Mammary epithelial cell (primary cell): ENCODE measurements at regions of chr10 and their contacts with region 1.

Region 1: DNA sequence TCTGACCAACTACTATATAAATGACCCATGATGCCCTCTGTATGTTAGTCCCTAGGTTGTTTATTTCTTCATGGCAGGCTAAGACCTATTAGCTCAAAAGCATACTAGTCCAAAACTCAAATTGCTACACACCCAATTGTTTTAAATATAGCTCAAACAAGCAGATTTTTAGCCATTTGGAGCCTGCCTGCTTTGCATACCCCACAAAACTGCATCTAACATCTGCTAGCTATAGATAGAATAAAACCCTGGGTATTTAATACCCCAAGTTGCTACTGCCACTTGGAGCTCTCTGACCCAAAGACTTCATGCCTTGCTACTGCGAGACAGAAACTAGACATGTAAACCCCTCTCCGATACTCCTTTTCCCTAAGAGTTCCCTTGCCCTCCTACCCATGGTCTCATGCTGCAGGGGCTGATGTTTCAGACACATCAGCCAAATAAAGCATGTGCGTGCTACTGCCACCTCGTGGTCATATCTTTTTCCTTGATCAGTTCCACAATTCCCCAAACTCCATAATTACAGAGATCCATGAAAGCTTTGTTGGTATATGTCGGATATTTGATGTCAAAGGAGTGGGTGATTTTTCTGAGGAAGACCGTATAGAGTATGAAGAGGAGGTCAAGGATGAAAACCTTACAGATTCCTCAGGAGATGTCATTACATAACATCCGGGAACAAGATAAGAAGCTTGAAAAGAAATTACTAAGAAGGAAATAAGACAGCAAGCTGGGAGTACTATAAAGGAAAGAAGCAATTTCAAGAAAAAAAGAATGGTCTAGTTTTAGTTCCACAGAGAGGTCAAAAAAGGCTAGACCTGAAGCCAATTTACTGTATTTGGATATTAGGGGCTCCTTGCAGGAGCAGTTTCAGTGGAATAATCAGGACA is 386.6 kb downstream of the SH2D4B start:
- DNase-seq: peak; percentile 21
- H3K4me3 ChIP-seq: no peak overlapping the region
- H3K27ac ChIP-seq: no peak overlapping the region
- H3K4me1 ChIP-seq: no peaks in the 10 kb centered on the region
- H3K27me3 ChIP-seq: no peaks in the 10 kb centered on the region
- CTCF ChIP-seq: peak; percentile 48 to 74

Region 2: GRCh38 chr10:80444646-80445319 is 479.5 kb before region 1 on chr10:
- CTCF ChIA-PET with region 1: no interaction called
- dilution Hi-C with region 1: no loop called
- in situ Hi-C with region 1: no loop called
- intact Hi-C with region 1: loop called (anchors 1 kb)
- DNase-seq: peak; percentile 57
- H3K4me3 ChIP-seq: no peak overlapping the region
- H3K27ac ChIP-seq: no peak overlapping the region
- H3K4me1 ChIP-seq: peaks cover 3% of the 10 kb centered on the region
- H3K27me3 ChIP-seq: no peaks in the 10 kb centered on the region
- CTCF ChIP-seq: peak; percentile 80 to 92

Region 3: DNA sequence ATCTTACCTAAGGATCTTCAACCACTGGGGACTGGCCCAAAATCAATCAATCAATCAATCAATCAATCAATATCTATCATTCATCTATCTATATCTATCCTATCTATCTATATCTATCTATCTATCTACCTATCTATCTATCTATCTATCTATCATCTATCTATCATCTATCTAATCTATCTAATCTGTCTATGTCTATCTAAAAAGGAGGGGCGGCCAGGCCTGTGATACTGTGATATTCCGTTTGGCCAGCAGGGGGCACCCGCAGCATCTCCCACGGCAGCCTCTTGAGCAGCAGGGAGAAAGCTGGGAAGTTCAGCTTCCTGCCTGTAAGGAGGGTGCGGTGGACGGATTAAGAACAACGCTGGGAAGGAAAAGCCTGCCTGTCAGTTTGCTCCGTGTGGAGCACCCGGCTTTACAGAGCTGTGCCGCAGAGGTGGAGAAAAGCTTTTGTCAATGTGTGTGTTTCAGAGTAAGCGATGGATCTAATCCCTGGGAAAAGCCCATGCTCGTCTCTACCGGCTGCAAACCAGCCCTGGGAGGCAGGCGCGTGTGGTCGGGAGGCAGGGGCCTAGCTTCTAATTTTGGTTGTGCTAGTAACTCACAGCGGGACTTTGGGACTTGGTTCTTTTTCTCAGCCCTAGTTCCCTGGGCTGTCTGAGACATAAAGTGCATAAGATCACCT is 261.6 kb before region 1 on chr10:
- CTCF ChIA-PET with region 1: interaction called, 3 read pairs
- dilution Hi-C with region 1: no loop called
- in situ Hi-C with region 1: no loop called
- intact Hi-C with region 1: loop called (anchors 1 kb)
- DNase-seq: peak; percentile 65
- H3K4me3 ChIP-seq: peak overlapping the region in 1 of 3 experiments; percentile 6
- H3K27ac ChIP-seq: no peak overlapping the region
- H3K4me1 ChIP-seq: no peaks in the 10 kb centered on the region
- H3K27me3 ChIP-seq: no peaks in the 10 kb centered on the region
- CTCF ChIP-seq: peak; percentile 80 to 88

Region 4: DNA sequence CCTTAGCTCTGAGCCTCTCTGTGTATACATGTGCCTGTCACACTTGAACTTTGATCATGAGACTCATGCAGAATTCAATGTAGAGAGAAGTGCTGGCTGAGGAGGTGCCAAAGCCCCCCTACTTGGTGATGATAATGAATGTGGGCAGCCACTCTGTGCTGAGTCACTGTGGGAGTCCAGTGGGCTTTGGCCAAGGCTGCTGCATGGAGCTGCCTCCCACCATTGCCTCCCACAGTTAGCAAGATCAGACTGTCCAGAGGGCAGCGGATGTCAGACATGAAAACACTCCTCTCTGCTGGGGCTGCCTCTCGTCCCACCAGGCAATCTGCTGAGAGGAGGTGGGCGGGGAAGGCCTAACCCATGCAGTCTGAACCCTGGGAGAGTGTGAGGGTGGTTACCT is 206.3 kb before region 1 on chr10:
- CTCF ChIA-PET with region 1: no interaction called
- dilution Hi-C with region 1: loop called (anchors 10 kb)
- in situ Hi-C with region 1: no loop called
- intact Hi-C with region 1: no loop called
- DNase-seq: no peak
- H3K4me3 ChIP-seq: no peak overlapping the region
- H3K27ac ChIP-seq: no peak overlapping the region
- H3K4me1 ChIP-seq: no peaks in the 10 kb centered on the region
- H3K27me3 ChIP-seq: no peaks in the 10 kb centered on the region
- CTCF ChIP-seq: no peak

Region 5: DNA sequence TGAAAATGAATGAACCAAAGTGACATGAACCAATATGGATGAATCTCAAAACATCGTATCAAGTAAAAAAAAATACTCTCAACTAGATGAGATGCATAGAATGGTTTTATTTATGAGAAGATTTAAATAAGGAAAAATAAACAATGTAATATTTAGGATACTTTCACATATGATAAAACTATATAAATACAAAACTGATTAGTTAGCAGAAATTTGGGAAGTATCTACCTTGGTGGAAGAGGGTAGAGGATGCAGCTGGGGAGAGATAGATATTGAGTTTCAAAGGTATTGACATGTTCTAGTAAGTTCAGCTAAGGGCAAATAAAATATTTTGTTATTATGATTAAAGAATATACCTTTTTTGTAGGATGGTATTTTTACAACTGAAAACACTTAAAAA is 76.5 kb after region 1 on chr10:
- CTCF ChIA-PET with region 1: no interaction called
- dilution Hi-C with region 1: no loop called
- in situ Hi-C with region 1: no loop called
- intact Hi-C with region 1: no loop called
- DNase-seq: no peak
- H3K4me3 ChIP-seq: no peak overlapping the region
- H3K27ac ChIP-seq: no peak overlapping the region
- H3K4me1 ChIP-seq: no peaks in the 10 kb centered on the region
- H3K27me3 ChIP-seq: no peaks in the 10 kb centered on the region
- CTCF ChIP-seq: no peak

Region 6: GRCh38 chr10:81018708-81019365 is 94.5 kb after region 1 on chr10:
- CTCF ChIA-PET with region 1: no interaction called
- dilution Hi-C with region 1: no loop called
- in situ Hi-C with region 1: no loop called
- intact Hi-C with region 1: loop called (anchors 10 kb)
- DNase-seq: peak; percentile 34
- H3K4me3 ChIP-seq: no peak overlapping the region
- H3K27ac ChIP-seq: no peak overlapping the region
- H3K4me1 ChIP-seq: no peaks in the 10 kb centered on the region
- H3K27me3 ChIP-seq: no peaks in the 10 kb centered on the region
- CTCF ChIP-seq: peak; percentile 60 to 81